Activated CD4-positive, alpha-beta T cell treated with anti-CD3 and anti-CD28 coated beads, Interleukin-2, amount 10 ng/mL, durations not matched to agents 24 days and 14 days (primary cell): ENCODE measurements at regions of chr1 and their contacts with region 1.

Region 1: GRCh38 chr1:116826818-116827606 is 72.8 kb downstream of the CD2 start:
- DNase-seq: peak; percentile 91
- H3K4me3 Mint-ChIP-seq: peak overlapping the region; percentile 76
- H3K27ac Mint-ChIP-seq: peak overlapping the region; percentile 93
- H3K4me1 Mint-ChIP-seq: peaks cover 59% of the 10 kb centered on the region
- H3K27me3 Mint-ChIP-seq: no peaks in the 10 kb centered on the region

Region 2: GRCh38 chr1:116504308-116505156 is 322.5 kb before region 1 on chr1:
- intact Hi-C with region 1: loop called (anchors 5 kb)
- DNase-seq: peak; percentile 96
- H3K4me3 Mint-ChIP-seq: peak overlapping the region; percentile 46
- H3K27ac Mint-ChIP-seq: peak overlapping the region; percentile 96
- H3K4me1 Mint-ChIP-seq: peaks cover 72% of the 10 kb centered on the region
- H3K27me3 Mint-ChIP-seq: no peaks in the 10 kb centered on the region

Region 3: DNA sequence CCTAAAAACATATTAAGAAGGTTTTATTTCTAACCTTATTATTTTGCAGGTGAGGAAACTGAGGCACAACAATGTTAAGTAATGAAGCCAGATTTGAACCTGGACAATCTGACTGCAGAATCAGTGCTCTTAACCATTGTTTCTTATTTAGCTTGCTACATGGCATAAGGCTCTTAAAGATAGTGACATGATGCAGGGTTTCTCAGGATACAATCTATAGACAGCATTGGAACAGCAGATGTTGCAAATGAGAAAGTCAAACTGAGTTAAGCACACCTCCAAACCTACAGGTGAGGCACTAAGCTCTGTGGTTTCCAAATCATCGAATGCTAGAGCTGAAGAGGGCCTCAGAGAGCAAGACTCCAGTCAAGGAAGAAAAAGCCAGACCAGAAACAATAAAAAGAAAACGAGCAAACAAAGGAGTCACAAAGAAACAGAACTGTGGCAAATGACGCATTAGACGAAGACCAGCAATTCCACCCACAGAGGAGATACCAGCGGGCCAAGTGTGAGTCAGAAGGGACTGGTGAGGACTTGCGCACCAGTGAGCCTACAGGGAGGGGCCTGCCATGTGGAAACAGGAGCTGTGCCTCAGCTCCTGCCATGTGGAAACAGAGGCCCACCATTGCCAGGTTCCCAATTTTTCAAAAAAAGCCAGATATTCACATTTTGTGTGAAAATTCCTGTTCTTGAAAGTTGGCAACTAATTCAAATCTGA is 270.6 kb before region 1 on chr1:
- intact Hi-C with region 1: loop called (anchors 5 kb)
- DNase-seq: peak; percentile 88
- H3K4me3 Mint-ChIP-seq: peak overlapping the region; percentile 19
- H3K27ac Mint-ChIP-seq: peak overlapping the region; percentile 86
- H3K4me1 Mint-ChIP-seq: peaks cover 69% of the 10 kb centered on the region
- H3K27me3 Mint-ChIP-seq: no peaks in the 10 kb centered on the region

Region 4: GRCh38 chr1:116769561-116769977 is 57.4 kb before region 1 on chr1:
- intact Hi-C with region 1: loop called (anchors 1 kb)
- DNase-seq: peak; percentile 93
- H3K4me3 Mint-ChIP-seq: peak overlapping the region; percentile 98
- H3K27ac Mint-ChIP-seq: peak overlapping the region; percentile 99
- H3K4me1 Mint-ChIP-seq: peaks cover 83% of the 10 kb centered on the region
- H3K27me3 Mint-ChIP-seq: no peaks in the 10 kb centered on the region

Region 5: GRCh38 chr1:116847688-116848531 is 20.9 kb after region 1 on chr1:
- intact Hi-C with region 1: loop called (anchors 1 kb)
- DNase-seq: peak; percentile 71
- H3K4me3 Mint-ChIP-seq: peak overlapping the region; percentile 44
- H3K27ac Mint-ChIP-seq: peak overlapping the region; percentile 61
- H3K4me1 Mint-ChIP-seq: peaks cover 23% of the 10 kb centered on the region
- H3K27me3 Mint-ChIP-seq: no peaks in the 10 kb centered on the region

Region 6: DNA sequence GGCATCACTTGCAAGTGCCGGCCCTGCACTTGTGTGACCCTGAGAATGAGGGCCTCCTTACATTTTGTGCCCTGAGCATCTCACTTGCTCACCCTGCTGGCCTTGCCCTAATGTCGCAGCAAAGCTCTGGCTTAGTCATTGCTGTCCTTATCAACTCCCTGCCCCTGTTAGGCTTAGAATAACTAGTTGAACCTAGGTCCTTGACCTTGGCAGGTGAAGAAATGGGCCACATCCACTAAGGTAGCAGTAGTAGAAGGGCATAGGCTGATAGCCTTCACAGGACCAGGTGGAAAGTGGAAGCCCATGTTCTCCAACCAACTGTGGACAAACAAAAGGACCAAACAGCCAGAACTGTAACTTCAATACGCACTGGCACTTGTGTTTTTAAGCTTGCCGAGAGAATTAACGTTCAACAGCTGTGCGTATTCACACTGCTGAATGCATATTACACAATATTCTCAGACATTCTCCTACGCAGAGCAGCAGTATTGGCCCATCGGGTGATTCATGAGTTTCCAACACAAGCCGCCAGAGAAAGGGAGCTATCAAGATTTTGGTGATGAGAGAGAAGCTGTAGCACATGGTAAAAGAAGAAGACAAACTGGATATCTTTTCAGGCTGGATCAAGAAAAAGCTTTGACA is 55.0 kb after region 1 on chr1:
- intact Hi-C with region 1: loop called (anchors 2 kb)
- DNase-seq: peak; percentile 82
- H3K4me3 Mint-ChIP-seq: no peak overlapping the region
- H3K27ac Mint-ChIP-seq: no peak overlapping the region
- H3K4me1 Mint-ChIP-seq: peaks cover 28% of the 10 kb centered on the region
- H3K27me3 Mint-ChIP-seq: no peaks in the 10 kb centered on the region